ENCODE measurements at regions of chr3 and their contacts with region 1.

Region 1: GRCh38 chr3:136075218-136075808 is 109.8 kb downstream of the PPP2R3A start:
- DNase-seq: peak; percentile 62
- H3K4me3 ChIP-seq: no peak overlapping the region
- H3K27ac ChIP-seq: no peak overlapping the region
- H3K27me3 ChIP-seq: no peaks in the 10 kb centered on the region
- CTCF ChIP-seq: peak; percentile 91

Region 2: GRCh38 chr3:136093771-136094170 is 18.5 kb after region 1 on chr3:
- CTCF ChIA-PET with region 1: interaction called, 14 read pairs
- POLR2A ChIA-PET with region 1: no interaction called
- DNase-seq: no peak
- H3K4me3 ChIP-seq: no peak overlapping the region
- H3K27ac ChIP-seq: no peak overlapping the region
- H3K27me3 ChIP-seq: no peaks in the 10 kb centered on the region
- CTCF ChIP-seq: no peak

Region 3: DNA sequence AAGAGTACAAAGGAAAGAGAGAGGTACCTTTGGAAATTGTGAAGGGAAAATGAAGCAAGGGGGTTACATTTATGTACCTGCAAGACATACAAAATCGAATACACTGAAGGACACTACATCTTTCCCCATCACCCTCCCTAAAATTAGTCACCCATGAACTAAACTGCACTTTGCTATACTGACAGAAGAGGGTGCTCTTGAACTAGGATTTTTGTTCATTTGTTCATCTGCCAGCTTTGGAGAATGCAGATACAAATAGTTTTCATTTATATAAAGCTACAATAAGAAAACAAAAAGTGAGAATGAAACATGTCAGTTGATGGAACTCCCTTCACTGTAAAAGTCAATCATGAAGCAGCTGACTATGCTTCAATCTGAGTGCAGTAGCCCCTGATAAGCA is 230.6 kb after region 1 on chr3:
- CTCF ChIA-PET with region 1: interaction called, 19 read pairs
- POLR2A ChIA-PET with region 1: no interaction called
- DNase-seq: peak; percentile 43
- H3K4me3 ChIP-seq: no peak overlapping the region
- H3K27ac ChIP-seq: no peak overlapping the region
- H3K27me3 ChIP-seq: no peaks in the 10 kb centered on the region
- CTCF ChIP-seq: peak; percentile 72

Region 4: GRCh38 chr3:136671921-136672320 is 596.6 kb after region 1 on chr3:
- CTCF ChIA-PET with region 1: no interaction called
- POLR2A ChIA-PET with region 1: no interaction called
- DNase-seq: peak; percentile 26
- H3K4me3 ChIP-seq: no peak overlapping the region
- H3K27ac ChIP-seq: no peak overlapping the region
- H3K27me3 ChIP-seq: no peaks in the 10 kb centered on the region
- CTCF ChIP-seq: no peak